Activated naive CD4-positive, alpha-beta T cell treated with anti-CD3 and anti-CD28 coated beads for 36 hours (primary cell): ENCODE measurements at regions of chr7 and their contacts with region 1.

Region 1: DNA sequence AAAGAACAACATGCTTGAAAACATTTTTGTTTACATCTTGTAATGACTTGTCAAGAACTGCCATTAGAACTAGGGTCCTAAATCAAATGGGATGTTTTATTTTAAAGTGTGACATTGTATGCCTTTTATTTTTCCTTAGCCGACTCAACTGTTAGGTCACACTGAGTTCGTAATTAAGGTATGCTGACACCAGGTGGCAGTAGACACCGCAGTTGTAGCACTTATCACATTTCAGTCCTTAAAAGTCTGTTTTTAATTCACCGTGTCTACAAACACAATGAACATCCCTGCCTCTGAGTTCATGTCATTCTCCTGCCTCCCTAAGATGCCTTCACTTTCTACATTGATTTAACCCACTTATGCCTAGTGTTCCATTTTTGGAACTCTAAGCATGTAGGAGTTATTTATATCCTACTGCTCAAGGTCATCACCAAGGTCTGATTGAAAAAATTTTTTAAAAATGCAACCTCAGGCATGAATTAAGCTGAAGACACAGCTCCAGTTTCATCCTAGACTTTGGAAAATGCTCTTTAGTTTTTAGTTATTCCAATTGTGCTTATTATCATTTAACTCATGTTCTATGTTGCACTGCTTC is 186.1 kb downstream of the BMPER start:
- DNase-seq: peak; percentile 40
- H3K4me3 Mint-ChIP-seq: no peak overlapping the region
- H3K27ac Mint-ChIP-seq: no peak overlapping the region
- H3K4me1 Mint-ChIP-seq: no peaks in the 10 kb centered on the region
- H3K27me3 Mint-ChIP-seq: no peaks in the 10 kb centered on the region

Region 2: GRCh38 chr7:34327681-34328080 is 236.3 kb after region 1 on chr7:
- CTCF ChIA-PET with region 1: no interaction called
- intact Hi-C with region 1: no loop called
- DNase-seq: no peak
- H3K4me3 Mint-ChIP-seq: no peak overlapping the region
- H3K27ac Mint-ChIP-seq: no peak overlapping the region
- H3K4me1 Mint-ChIP-seq: no peaks in the 10 kb centered on the region
- H3K27me3 Mint-ChIP-seq: peaks cover 12% of the 10 kb centered on the region

Region 3: GRCh38 chr7:34596892-34597291 is 505.5 kb after region 1 on chr7:
- CTCF ChIA-PET with region 1: no interaction called
- intact Hi-C with region 1: loop called (anchors 5 kb)
- DNase-seq: no peak
- H3K4me3 Mint-ChIP-seq: no peak overlapping the region
- H3K27ac Mint-ChIP-seq: no peak overlapping the region
- H3K4me1 Mint-ChIP-seq: no peaks in the 10 kb centered on the region
- H3K27me3 Mint-ChIP-seq: no peaks in the 10 kb centered on the region